ENCODE measurements at regions of chr15 and their contacts with region 1.

Region 1: GRCh38 chr15:88649286-88649733 is 10.5 kb downstream of the ISG20 start:
- DNase-seq: peak; percentile 62 to 76 (median 68)
- H3K4me3 ChIP-seq: peak overlapping the region in 1 of 2 donors; percentile 1
- H3K4me3 Mint-ChIP-seq: peak overlapping the region; percentile 22 to 89 (median 78)
- H3K27ac ChIP-seq: peak overlapping the region; percentile 78
- H3K27ac Mint-ChIP-seq: peak overlapping the region; percentile 94 to 98 (median 95)
- H3K4me1 ChIP-seq: peaks cover 96% of the 10 kb centered on the region
- H3K4me1 Mint-ChIP-seq: peaks cover 65 to 94% (median 79%) of the 10 kb centered on the region in 4 donors
- H3K27me3 ChIP-seq: no peaks in the 10 kb centered on the region
- H3K27me3 Mint-ChIP-seq: no peaks in the 10 kb centered on the region

Region 2: GRCh38 chr15:88630131-88630721 is 19.1 kb before region 1 on chr15:
- CTCF ChIA-PET with region 1: interaction called, 95 read pairs
- POLR2A ChIA-PET with region 1: interaction called, 113 read pairs
- intact Hi-C with region 1: no loop called
- DNase-seq: no peak
- H3K4me3 ChIP-seq: peak overlapping the region in 1 of 2 donors; percentile 8
- H3K4me3 Mint-ChIP-seq: peak overlapping the region; percentile 66 to 88 (median 76)
- H3K27ac ChIP-seq: peak overlapping the region; percentile 52
- H3K27ac Mint-ChIP-seq: peak overlapping the region; percentile 81 to 99 (median 91)
- H3K4me1 ChIP-seq: peaks cover 99% of the 10 kb centered on the region
- H3K4me1 Mint-ChIP-seq: peaks cover 48 to 99% (median 81%) of the 10 kb centered on the region in 4 donors
- H3K27me3 ChIP-seq: no peaks in the 10 kb centered on the region
- H3K27me3 Mint-ChIP-seq: no peaks in the 10 kb centered on the region

Region 3: GRCh38 chr15:89164712-89165211 is 515.5 kb after region 1 on chr15:
- CTCF ChIA-PET with region 1: no interaction called
- POLR2A ChIA-PET with region 1: no interaction called
- intact Hi-C with region 1: no loop called
- DNase-seq: no peak
- H3K4me3 ChIP-seq: no peak overlapping the region
- H3K4me3 Mint-ChIP-seq: no peak overlapping the region
- H3K27ac ChIP-seq: no peak overlapping the region
- H3K27ac Mint-ChIP-seq: peak overlapping the region in 2 of 7 donors; percentile 4 to 32
- H3K4me1 ChIP-seq: peaks cover 13% of the 10 kb centered on the region
- H3K4me1 Mint-ChIP-seq: peaks cover 5 to 14% (median 9%) of the 10 kb centered on the region in 4 donors
- H3K27me3 ChIP-seq: no peaks in the 10 kb centered on the region
- H3K27me3 Mint-ChIP-seq: no peaks in the 10 kb centered on the region